Activated CD8-positive, alpha-beta T cell treated with anti-CD3 and anti-CD28 coated beads for 36 hours (primary cell): ENCODE measurements at regions of chr1 and their contacts with region 1.

Region 1: DNA sequence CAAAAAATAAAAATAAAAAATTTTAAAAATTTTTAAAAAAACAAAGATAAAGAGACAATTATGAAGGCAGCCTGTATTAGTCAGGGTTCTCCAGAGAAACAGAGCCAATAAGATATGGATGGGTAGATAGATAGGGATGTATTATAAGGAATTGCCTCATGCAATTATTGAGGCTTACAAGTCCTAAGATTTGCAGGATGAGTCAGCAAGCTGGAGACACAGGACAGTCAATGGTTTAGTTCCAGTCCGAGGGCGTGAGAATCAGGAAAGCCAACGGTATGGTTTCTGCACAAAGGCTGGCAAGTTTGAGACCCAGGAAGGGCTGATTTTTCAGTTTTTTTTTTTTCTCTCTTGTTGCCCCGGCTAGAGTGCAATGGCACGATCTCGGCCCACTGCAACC is 24.1 kb upstream of the EIF4G3 start:
- DNase-seq: no peak
- ATAC-seq: no peak
- H3K4me3 Mint-ChIP-seq: no peak overlapping the region
- H3K27ac Mint-ChIP-seq: no peak overlapping the region
- H3K4me1 Mint-ChIP-seq: no peaks in the 10 kb centered on the region
- H3K27me3 Mint-ChIP-seq: peaks cover 4% of the 10 kb centered on the region
- CTCF ChIP-seq: no peak

Region 2: GRCh38 chr1:20850021-20850420 is 350.7 kb before region 1 on chr1:
- CTCF ChIA-PET with region 1: interaction called, 12 read pairs
- POLR2A ChIA-PET with region 1: no interaction called
- intact Hi-C with region 1: no loop called
- DNase-seq: no peak
- ATAC-seq: no peak
- H3K4me3 Mint-ChIP-seq: no peak overlapping the region
- H3K27ac Mint-ChIP-seq: no peak overlapping the region
- H3K4me1 Mint-ChIP-seq: no peaks in the 10 kb centered on the region
- H3K27me3 Mint-ChIP-seq: no peaks in the 10 kb centered on the region
- CTCF ChIP-seq: no peak

Region 3: DNA sequence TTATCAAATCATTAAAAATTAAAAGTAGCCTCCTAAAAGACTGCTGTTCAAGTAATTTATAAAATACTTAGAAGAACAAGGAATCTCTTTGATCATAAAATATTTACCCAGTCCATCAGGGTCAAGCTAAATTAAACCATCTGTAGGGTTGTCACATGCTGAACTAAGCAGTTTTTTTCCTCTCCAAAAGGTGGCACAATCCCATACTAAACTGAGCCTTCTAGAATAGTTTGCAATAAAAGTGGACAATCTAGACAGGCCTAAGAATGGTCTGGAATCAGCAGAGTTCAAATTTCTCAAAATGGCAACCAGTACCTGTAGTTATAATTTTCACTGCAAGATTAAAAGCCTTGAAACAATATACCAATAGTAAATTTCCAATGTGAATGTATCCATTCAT is 218.9 kb before region 1 on chr1:
- CTCF ChIA-PET with region 1: interaction called, 13 read pairs
- POLR2A ChIA-PET with region 1: no interaction called
- intact Hi-C with region 1: no loop called
- DNase-seq: no peak
- ATAC-seq: no peak
- H3K4me3 Mint-ChIP-seq: no peak overlapping the region
- H3K27ac Mint-ChIP-seq: no peak overlapping the region
- H3K4me1 Mint-ChIP-seq: peaks cover 1% of the 10 kb centered on the region
- H3K27me3 Mint-ChIP-seq: no peaks in the 10 kb centered on the region
- CTCF ChIP-seq: no peak

Region 4: GRCh38 chr1:21050031-21050430 is 150.7 kb before region 1 on chr1:
- CTCF ChIA-PET with region 1: no interaction called
- POLR2A ChIA-PET with region 1: no interaction called
- intact Hi-C with region 1: no loop called
- DNase-seq: no peak
- ATAC-seq: no peak
- H3K4me3 Mint-ChIP-seq: no peak overlapping the region
- H3K27ac Mint-ChIP-seq: no peak overlapping the region
- H3K4me1 Mint-ChIP-seq: no peaks in the 10 kb centered on the region
- H3K27me3 Mint-ChIP-seq: no peaks in the 10 kb centered on the region
- CTCF ChIP-seq: no peak

Region 5: DNA sequence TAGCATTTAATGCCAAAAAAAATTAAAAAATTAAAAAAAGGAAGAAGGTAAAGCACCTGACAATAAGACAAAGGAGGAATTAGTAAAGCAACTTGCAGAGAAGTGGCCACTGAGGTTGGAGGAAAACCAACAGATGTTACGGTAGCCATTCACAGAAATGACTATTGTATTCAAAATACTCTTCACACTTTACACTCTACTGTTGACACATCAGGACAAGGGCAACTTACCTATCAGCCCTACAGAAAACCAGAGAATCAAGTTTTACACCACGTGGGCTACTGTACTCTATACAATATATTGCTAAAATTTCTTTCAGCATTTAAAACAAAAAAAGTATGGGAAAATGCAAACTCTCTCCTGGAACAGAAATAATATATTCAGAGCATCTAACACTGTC is 94.1 kb before region 1 on chr1:
- CTCF ChIA-PET with region 1: interaction called, 10 read pairs
- POLR2A ChIA-PET with region 1: no interaction called
- intact Hi-C with region 1: no loop called
- DNase-seq: no peak
- ATAC-seq: no peak
- H3K4me3 Mint-ChIP-seq: no peak overlapping the region
- H3K27ac Mint-ChIP-seq: no peak overlapping the region
- H3K4me1 Mint-ChIP-seq: no peaks in the 10 kb centered on the region
- H3K27me3 Mint-ChIP-seq: no peaks in the 10 kb centered on the region
- CTCF ChIP-seq: no peak

Region 6: GRCh38 chr1:21176586-21177555 is 23.9 kb before region 1 on chr1 and contains the start of gene EIF4G3:
- CTCF ChIA-PET with region 1: interaction called, 24 read pairs
- POLR2A ChIA-PET with region 1: no interaction called
- intact Hi-C with region 1: no loop called
- DNase-seq: peak; percentile 99
- ATAC-seq: peak; percentile 98
- H3K4me3 Mint-ChIP-seq: peak within 1 kb of the TSS; percentile 81
- H3K27ac Mint-ChIP-seq: peak within 1 kb of the TSS; percentile 93
- H3K4me1 Mint-ChIP-seq: peaks cover 26% of the 10 kb centered on the region
- H3K27me3 Mint-ChIP-seq: no peaks in the 10 kb centered on the region
- CTCF ChIP-seq: no peak
- total RNA-seq, gene EIF4G3: 48.2 to 48.4 TPM

Region 7: DNA sequence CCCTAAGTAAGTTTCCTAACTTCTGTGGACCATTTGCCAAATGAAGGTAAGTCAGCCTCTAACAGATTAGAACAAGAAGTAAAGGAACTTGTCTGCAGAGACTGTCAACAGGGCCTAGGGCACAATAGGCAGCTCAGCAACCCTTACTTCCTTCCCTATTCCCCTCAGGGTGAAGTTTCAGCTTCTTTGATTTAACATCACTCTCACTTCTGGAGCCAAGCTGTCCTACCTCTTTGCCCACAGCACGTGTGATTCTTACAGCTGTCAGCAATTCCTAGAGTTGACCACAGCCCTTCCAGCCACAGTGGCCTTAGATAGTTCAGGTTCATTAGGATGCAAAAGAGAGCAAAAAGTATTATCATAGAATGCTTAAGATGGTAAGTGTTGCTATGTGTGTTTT is 16.5 kb before region 1 on chr1:
- CTCF ChIA-PET with region 1: interaction called, 24 read pairs
- POLR2A ChIA-PET with region 1: interaction called, 3 read pairs
- intact Hi-C with region 1: no loop called
- DNase-seq: no peak
- ATAC-seq: no peak
- H3K4me3 Mint-ChIP-seq: no peak overlapping the region
- H3K27ac Mint-ChIP-seq: no peak overlapping the region
- H3K4me1 Mint-ChIP-seq: no peaks in the 10 kb centered on the region
- H3K27me3 Mint-ChIP-seq: no peaks in the 10 kb centered on the region
- CTCF ChIP-seq: no peak

Region 8: GRCh38 chr1:21216835-21217811 is 16.4 kb after region 1 on chr1:
- CTCF ChIA-PET with region 1: interaction called, 19 read pairs
- POLR2A ChIA-PET with region 1: no interaction called
- intact Hi-C with region 1: no loop called
- DNase-seq: peak; percentile 86
- ATAC-seq: peak; percentile 74
- H3K4me3 Mint-ChIP-seq: no peak overlapping the region
- H3K27ac Mint-ChIP-seq: no peak overlapping the region
- H3K4me1 Mint-ChIP-seq: peaks cover 2% of the 10 kb centered on the region
- H3K27me3 Mint-ChIP-seq: no peaks in the 10 kb centered on the region
- CTCF ChIP-seq: peak; percentile 84

Region 9: DNA sequence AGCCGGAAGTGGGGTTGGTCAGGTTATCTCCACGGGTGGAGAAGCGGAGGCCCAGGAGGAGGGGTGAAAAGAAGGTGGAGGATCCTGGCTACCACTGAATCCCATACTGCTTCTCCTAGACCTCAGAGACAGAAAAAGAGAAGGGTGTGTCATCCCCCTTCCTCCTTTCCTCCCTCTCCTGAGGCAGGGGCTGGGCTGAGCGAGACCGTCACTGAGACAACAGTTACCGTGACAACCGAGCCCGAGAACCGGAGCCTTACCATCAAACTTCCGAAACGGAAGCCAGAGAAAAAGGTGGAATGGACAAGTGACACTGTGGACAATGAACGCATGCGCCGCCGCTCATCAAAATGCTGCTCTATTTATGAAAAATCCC is 197.0 kb after region 1 on chr1:
- CTCF ChIA-PET with region 1: no interaction called
- POLR2A ChIA-PET with region 1: no interaction called
- intact Hi-C with region 1: no loop called
- DNase-seq: peak; percentile 41
- ATAC-seq: peak; percentile 47
- H3K4me3 Mint-ChIP-seq: peak overlapping the region; percentile 62
- H3K27ac Mint-ChIP-seq: peak overlapping the region; percentile 9
- H3K4me1 Mint-ChIP-seq: peaks cover 9% of the 10 kb centered on the region
- H3K27me3 Mint-ChIP-seq: peaks cover 8% of the 10 kb centered on the region
- CTCF ChIP-seq: no peak